Activated B cell treated with CpG ODN at 0.5 μM for 24 hours (primary cell): ENCODE measurements at regions of chr13 and their contacts with region 1.

Region 1: DNA sequence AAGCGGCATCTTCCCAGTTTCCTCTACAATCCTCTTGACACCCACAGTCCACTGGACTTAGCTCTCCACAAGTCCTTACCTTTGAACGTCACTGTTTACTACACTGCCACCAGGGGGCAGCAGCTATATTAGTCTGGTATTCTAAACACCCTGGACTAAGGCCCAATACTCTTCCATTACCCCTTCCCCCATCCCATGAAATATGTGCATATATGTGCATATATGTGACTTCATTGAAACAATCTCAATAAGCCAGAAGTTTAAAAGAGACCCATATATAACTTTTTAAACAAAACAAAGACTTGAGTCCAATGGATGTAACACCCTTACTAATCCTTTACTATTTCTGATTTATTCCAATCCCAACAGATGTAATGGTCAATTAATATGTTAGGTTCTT is 15.5 kb downstream of the GGACT start:
- DNase-seq: peak; percentile 35
- ATAC-seq: peak; percentile 73
- H3K4me3 Mint-ChIP-seq: no peak overlapping the region
- H3K27ac Mint-ChIP-seq: no peak overlapping the region
- H3K4me1 Mint-ChIP-seq: no peaks in the 10 kb centered on the region
- H3K27me3 Mint-ChIP-seq: no peaks in the 10 kb centered on the region
- CTCF ChIP-seq: peak; percentile 54

Region 2: GRCh38 chr13:100044936-100045335 is 528.2 kb before region 1 on chr13:
- CTCF ChIA-PET with region 1: no interaction called
- POLR2A ChIA-PET with region 1: no interaction called
- intact Hi-C with region 1: no loop called
- DNase-seq: no peak
- ATAC-seq: no peak
- H3K4me3 Mint-ChIP-seq: no peak overlapping the region
- H3K27ac Mint-ChIP-seq: no peak overlapping the region
- H3K4me1 Mint-ChIP-seq: no peaks in the 10 kb centered on the region
- H3K27me3 Mint-ChIP-seq: peaks cover 4% of the 10 kb centered on the region
- CTCF ChIP-seq: no peak

Region 3: GRCh38 chr13:100588331-100589177 is 15.4 kb after region 1 on chr13 and contains the start of gene GGACT:
- CTCF ChIA-PET with region 1: interaction called, 8 read pairs
- POLR2A ChIA-PET with region 1: no interaction called
- intact Hi-C with region 1: loop called (anchors 1 kb)
- DNase-seq: peak; percentile 80
- ATAC-seq: peak; percentile 95
- H3K4me3 Mint-ChIP-seq: peak within 1 kb of the TSS; percentile 80
- H3K27ac Mint-ChIP-seq: peak within 1 kb of the TSS; percentile 65
- H3K4me1 Mint-ChIP-seq: peaks cover 14% of the 10 kb centered on the region
- H3K27me3 Mint-ChIP-seq: no peaks in the 10 kb centered on the region
- CTCF ChIP-seq: no peak
- total RNA-seq, gene GGACT: 6.5 and 7.5 TPM in 2 replicates

Region 4: GRCh38 chr13:100608906-100609305 is 35.8 kb after region 1 on chr13:
- CTCF ChIA-PET with region 1: no interaction called
- POLR2A ChIA-PET with region 1: no interaction called
- intact Hi-C with region 1: loop called (anchors 5 kb)
- DNase-seq: no peak
- ATAC-seq: peak; percentile 77
- H3K4me3 Mint-ChIP-seq: peak overlapping the region; percentile 32
- H3K27ac Mint-ChIP-seq: peak overlapping the region; percentile 78
- H3K4me1 Mint-ChIP-seq: peaks cover 50% of the 10 kb centered on the region
- H3K27me3 Mint-ChIP-seq: no peaks in the 10 kb centered on the region
- CTCF ChIP-seq: no peak

Region 5: DNA sequence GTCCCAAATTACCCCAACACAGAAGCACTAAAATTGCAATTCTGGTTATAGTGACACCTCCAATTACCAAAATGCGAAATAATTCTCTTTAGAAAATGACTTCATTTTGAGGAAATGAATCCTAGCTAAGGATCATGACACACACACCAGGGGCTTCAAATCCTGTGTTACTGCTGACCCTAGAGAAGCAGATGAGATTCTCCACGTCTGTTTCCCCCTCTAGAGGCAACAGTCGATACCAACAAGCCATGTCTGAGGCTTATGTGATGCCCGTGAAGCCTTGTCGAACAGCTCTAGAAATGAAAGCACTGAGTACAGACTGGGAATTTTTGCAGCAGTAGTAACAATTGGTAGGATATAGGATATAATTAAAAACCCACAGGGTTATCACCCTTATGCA is 255.1 kb after region 1 on chr13:
- CTCF ChIA-PET with region 1: no interaction called
- POLR2A ChIA-PET with region 1: no interaction called
- intact Hi-C with region 1: loop called (anchors 10 kb)
- DNase-seq: no peak
- ATAC-seq: no peak
- H3K4me3 Mint-ChIP-seq: no peak overlapping the region
- H3K27ac Mint-ChIP-seq: no peak overlapping the region
- H3K4me1 Mint-ChIP-seq: no peaks in the 10 kb centered on the region
- H3K27me3 Mint-ChIP-seq: no peaks in the 10 kb centered on the region
- CTCF ChIP-seq: no peak

Region 6: DNA sequence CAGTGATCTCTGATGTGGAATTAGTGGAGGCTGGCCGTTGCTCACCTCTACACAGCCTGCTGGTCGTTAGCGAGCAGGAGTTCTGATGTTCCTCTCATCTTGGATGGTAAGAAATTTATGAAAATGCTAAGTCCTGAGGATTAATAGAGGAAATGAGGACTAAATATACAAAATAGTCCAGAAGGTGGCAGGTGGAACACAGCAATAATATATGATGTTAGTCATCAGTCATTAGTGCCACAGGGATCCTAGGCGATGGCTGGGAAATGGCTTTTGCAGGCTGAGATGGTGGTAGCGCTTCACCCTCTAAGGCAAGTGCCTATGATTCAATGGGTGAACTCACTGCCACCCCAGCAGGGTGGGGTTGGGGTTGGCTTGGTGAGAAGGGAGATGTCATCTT is 440.1 kb after region 1 on chr13:
- CTCF ChIA-PET with region 1: no interaction called
- POLR2A ChIA-PET with region 1: no interaction called
- intact Hi-C with region 1: no loop called
- DNase-seq: no peak
- ATAC-seq: no peak
- H3K4me3 Mint-ChIP-seq: no peak overlapping the region
- H3K27ac Mint-ChIP-seq: no peak overlapping the region
- H3K4me1 Mint-ChIP-seq: no peaks in the 10 kb centered on the region
- H3K27me3 Mint-ChIP-seq: peaks cover 3% of the 10 kb centered on the region
- CTCF ChIP-seq: no peak

Region 7: DNA sequence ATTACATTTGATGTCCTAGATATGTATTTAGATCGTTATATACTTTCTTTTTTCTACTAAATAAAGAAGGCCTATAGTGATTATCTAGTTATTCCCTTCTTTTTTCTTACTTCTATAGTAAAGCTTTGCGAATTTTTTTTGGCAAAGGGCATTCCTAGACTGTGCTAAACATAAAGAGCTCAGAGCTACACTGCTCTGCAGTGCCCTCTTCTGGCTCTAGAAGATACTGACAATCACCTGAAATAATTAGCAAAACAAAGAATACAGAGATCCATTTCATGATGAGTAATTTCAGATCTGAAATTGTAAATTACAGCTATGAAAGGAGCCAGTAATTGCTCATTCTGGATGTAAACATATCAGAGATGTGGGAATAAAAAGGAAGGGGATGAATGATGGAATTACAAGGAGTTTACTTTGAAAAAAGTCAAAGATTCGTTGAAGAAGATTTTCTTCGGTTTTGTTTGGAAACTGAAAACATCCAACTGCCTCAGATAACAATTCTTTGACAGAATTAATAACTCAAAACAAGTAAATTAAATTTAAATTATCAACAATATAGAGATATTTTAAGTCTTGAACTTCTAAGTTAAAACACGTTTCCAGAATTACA is 554.7 kb after region 1 on chr13:
- CTCF ChIA-PET with region 1: interaction called, 20 read pairs
- POLR2A ChIA-PET with region 1: no interaction called
- intact Hi-C with region 1: no loop called
- DNase-seq: no peak
- ATAC-seq: peak; percentile 49
- H3K4me3 Mint-ChIP-seq: no peak overlapping the region
- H3K27ac Mint-ChIP-seq: no peak overlapping the region
- H3K4me1 Mint-ChIP-seq: no peaks in the 10 kb centered on the region
- H3K27me3 Mint-ChIP-seq: no peaks in the 10 kb centered on the region
- CTCF ChIP-seq: no peak